ENCODE measurements at regions of chr1 and their contacts with region 1.

Region 1: GRCh38 chr1:116485071-116485735 is 85.6 kb downstream of the CD58 start:
- DNase-seq: peak; percentile 87 to 95 (median 89)
- ATAC-seq: peak; percentile 96
- H3K4me3 ChIP-seq: no peak overlapping the region
- H3K27ac ChIP-seq: no peak overlapping the region
- H3K4me1 ChIP-seq: peaks cover 11 to 16% of the 10 kb centered on the region in 2 experiments; a peak in 3 of 5 replicates
- H3K27me3 ChIP-seq: no peaks in the 10 kb centered on the region; a peak in 1 of 5 replicates
- CTCF ChIP-seq: peak; percentile 96 to 97 (median 97)
- EP300 ChIP-seq: no peak
- POLR2A ChIP-seq: no peak
- RAD21 ChIP-seq: peak; percentile 98 to 100

Region 2: GRCh38 chr1:115275212-115275611 is 1210.0 kb before region 1 on chr1:
- CTCF ChIA-PET with region 1: no interaction called
- POLR2A ChIA-PET with region 1: no interaction called
- in situ Hi-C with region 1: no loop called
- intact Hi-C with region 1: no loop called
- DNase-seq: peak; percentile 30 to 58 (median 54)
- ATAC-seq: peak; percentile 59; the same call in 2 of the 3 replicates
- H3K4me3 ChIP-seq: no peak overlapping the region
- H3K27ac ChIP-seq: no peak overlapping the region
- H3K4me1 ChIP-seq: no peaks in the 10 kb centered on the region
- H3K27me3 ChIP-seq: no peaks in the 10 kb centered on the region
- CTCF ChIP-seq: peak; percentile 45 to 58 (median 58); a peak in 5 of 6 replicates
- EP300 ChIP-seq: no peak
- POLR2A ChIP-seq: no peak
- RAD21 ChIP-seq: peak in 1 of 2 experiments; percentile 39; a peak in 1 of 4 replicates

Region 3: DNA sequence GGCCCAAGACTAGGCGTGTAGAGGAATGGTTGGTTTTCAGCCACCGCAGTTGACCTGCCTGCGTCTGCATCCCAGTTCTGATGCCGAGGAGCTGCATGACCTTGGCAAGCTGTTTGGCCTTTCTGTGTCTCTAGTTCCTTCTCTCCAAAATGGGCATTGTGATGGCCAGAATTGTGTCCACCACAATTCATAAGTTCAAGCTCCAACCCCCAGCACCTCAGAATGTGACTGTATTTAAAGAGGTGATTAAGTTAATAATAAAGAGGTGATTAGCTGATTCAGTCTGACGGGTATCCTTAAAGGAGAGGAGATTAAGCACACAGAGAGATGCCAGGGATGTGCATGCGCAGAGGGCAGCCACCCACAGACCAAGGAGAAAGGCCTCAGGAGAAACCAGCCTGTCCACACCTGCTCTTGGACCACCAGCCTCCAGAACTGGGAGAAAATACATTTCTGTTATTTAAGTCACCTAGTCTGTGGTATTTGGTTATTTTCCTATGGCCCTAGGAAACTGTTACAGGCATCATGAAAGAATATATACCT is 345.5 kb before region 1 on chr1:
- CTCF ChIA-PET with region 1: interaction called, 74 read pairs
- POLR2A ChIA-PET with region 1: interaction called, 16 read pairs
- in situ Hi-C with region 1: no loop called
- intact Hi-C with region 1: loop called (anchors 1 kb)
- DNase-seq: no peak
- ATAC-seq: no peak
- H3K4me3 ChIP-seq: no peak overlapping the region
- H3K27ac ChIP-seq: no peak overlapping the region
- H3K4me1 ChIP-seq: no peaks in the 10 kb centered on the region; a peak in 1 of 5 replicates
- H3K27me3 ChIP-seq: no peaks in the 10 kb centered on the region
- CTCF ChIP-seq: no peak
- EP300 ChIP-seq: no peak
- POLR2A ChIP-seq: no peak
- RAD21 ChIP-seq: no peak

Region 4: DNA sequence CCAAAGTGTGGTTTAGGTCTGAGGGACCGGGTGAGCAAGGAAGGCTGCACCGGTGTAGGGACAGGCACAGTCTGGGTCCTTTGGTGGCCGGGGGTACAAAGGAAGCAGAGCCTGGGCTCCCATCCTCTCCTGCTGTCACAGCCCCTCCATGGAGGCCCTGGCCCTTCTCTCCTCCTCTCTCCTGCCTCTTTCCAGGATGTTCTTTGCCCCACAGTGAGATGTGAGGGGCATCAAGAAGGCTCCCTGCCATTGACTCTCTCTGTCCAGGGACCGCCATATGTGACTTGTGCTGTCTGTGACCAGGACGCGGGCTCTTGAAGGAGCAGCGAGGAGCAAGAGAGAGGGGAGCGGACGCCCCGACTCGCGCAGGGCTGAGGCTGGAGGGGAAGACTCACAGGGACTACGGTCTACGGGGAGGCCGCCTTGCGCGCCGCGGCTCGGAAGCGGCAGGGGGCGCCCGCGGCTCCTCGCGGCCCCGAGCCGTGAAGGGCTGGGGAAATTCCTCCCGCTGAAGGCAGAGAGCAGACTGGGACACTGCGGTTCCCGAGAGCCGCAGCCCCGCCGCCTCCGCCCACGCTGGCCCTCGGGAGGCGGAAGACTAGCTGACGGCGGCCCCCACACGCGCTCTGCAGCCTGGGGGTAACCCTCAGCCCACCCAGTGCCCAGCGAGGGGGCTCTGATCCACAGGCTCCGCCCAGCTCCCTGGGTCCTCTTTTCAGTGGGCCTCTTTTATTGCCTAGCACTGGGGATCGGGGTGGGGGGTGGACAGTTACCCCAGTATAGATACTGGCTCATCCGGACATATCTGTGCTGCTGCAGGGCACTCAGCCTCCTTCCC is 333.2 kb before region 1 on chr1:
- CTCF ChIA-PET with region 1: interaction called, 30 read pairs
- POLR2A ChIA-PET with region 1: interaction called, 4 read pairs
- in situ Hi-C with region 1: no loop called
- intact Hi-C with region 1: loop called (anchors 5 kb)
- DNase-seq: peak; percentile 88 to 94 (median 93)
- ATAC-seq: peak; percentile 99
- H3K4me3 ChIP-seq: peak overlapping the region; percentile 45
- H3K27ac ChIP-seq: peak overlapping the region; percentile 51; the same call in 1 of the 3 replicates
- H3K4me1 ChIP-seq: peaks cover 4 to 7% of the 10 kb centered on the region in 2 experiments
- H3K27me3 ChIP-seq: peaks cover 7% of the 10 kb centered on the region in 2 experiments; a peak in 2 of 5 replicates
- CTCF ChIP-seq: peak; percentile 94 to 99 (median 97)
- EP300 ChIP-seq: no peak
- POLR2A ChIP-seq: no peak
- RAD21 ChIP-seq: peak; percentile 92 to 93

Region 5: DNA sequence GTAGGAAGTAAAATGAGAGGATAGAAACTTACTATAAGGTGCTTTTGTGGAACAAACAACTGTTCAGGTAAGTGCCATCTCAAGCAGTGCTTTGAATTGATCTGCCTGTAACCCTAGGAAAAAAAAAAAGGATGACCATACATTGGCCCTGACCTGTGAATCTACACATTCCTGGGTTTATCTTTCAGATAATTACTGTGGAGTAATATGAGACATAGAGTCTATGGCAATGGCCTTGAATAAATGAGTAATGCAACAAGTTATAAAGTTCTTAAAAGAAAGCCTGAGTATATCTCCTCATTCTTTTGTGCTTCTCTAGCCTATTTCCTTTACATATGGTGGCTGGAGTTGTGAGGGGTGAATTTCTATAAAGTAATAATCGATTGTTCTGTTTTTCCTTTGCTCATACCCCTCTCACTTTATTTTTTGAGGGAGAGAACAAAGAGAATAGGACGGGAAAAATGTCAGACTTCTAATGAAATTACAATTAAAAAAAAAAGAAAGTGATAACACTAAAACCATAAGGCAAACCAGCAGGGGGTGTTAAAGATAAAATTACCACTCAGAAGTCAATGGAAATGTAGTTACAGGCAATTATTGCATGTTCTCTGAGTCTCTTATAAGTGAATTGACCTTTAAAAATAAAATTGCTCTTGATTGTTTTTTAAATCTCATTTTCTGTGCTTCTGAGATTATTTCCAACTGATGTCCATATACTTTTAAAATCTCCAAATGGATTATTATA is 124.6 kb before region 1 on chr1:
- CTCF ChIA-PET with region 1: interaction called, 33 read pairs
- POLR2A ChIA-PET with region 1: interaction called, 4 read pairs
- in situ Hi-C with region 1: loop called (anchors 5 kb)
- intact Hi-C with region 1: loop called (anchors 1 kb)
- DNase-seq: peak; percentile 39 to 59 (median 50)
- ATAC-seq: peak; percentile 65
- H3K4me3 ChIP-seq: no peak overlapping the region
- H3K27ac ChIP-seq: no peak overlapping the region
- H3K4me1 ChIP-seq: no peaks in the 10 kb centered on the region; a peak in 1 of 5 replicates
- H3K27me3 ChIP-seq: peaks cover 3 to 5% of the 10 kb centered on the region in 2 experiments; a peak in 3 of 5 replicates
- CTCF ChIP-seq: peak; percentile 31 to 75 (median 32); a peak in 3 of 6 replicates
- EP300 ChIP-seq: no peak
- POLR2A ChIP-seq: no peak
- RAD21 ChIP-seq: peak; percentile 52 to 87

Region 6: DNA sequence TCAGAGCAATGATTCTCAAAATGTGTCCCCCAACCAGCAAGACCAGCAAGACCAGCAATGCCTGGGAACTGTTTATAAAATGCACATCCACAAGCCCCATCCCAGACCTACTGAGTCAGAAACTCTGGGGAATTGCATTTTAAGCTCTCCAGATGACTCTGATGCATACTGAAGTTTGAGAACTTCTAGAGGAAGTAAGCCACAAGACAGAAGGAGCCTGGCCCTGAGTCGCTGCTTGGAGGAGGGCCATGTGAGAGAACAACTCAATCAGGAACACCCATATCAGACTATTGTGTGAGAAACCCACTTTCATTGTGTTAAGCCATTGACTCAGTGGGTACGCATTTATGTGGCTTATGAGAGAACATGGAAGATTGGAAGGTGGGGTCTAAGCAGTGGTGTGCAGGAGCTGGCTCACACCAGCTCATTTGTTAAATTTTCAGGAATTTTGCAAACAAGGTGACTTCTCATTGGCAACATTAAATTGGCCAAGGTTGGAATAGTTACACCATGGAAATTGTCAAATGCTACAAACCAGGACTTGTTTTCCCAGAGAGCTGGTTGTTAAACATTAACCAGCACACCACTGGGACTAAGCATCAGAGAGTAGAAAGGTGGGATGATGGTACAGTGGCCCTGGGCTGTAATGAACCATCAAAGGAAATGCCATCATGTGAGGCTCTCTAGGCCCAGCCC is 73.3 kb before region 1 on chr1:
- CTCF ChIA-PET with region 1: no interaction called
- POLR2A ChIA-PET with region 1: interaction called, 7 read pairs
- in situ Hi-C with region 1: no loop called
- intact Hi-C with region 1: loop called (anchors 2 kb)
- DNase-seq: no peak
- ATAC-seq: no peak
- H3K4me3 ChIP-seq: no peak overlapping the region
- H3K27ac ChIP-seq: no peak overlapping the region
- H3K4me1 ChIP-seq: peaks cover 41 to 83% of the 10 kb centered on the region in 2 experiments
- H3K27me3 ChIP-seq: no peaks in the 10 kb centered on the region
- CTCF ChIP-seq: no peak
- EP300 ChIP-seq: no peak
- POLR2A ChIP-seq: no peak
- RAD21 ChIP-seq: no peak

Region 7: GRCh38 chr1:117036018-117036461 is 550.8 kb after region 1 on chr1:
- CTCF ChIA-PET with region 1: no interaction called
- POLR2A ChIA-PET with region 1: no interaction called
- in situ Hi-C with region 1: no loop called
- intact Hi-C with region 1: no loop called
- DNase-seq: peak in 3 of 4 experiments; percentile 37 to 44 (median 38)
- ATAC-seq: peak; percentile 87
- H3K4me3 ChIP-seq: no peak overlapping the region
- H3K27ac ChIP-seq: no peak overlapping the region
- H3K4me1 ChIP-seq: no peaks in the 10 kb centered on the region; a peak in 2 of 5 replicates
- H3K27me3 ChIP-seq: no peaks in the 10 kb centered on the region
- CTCF ChIP-seq: peak in 2 of 3 experiments; percentile 36 to 38; a peak in 2 of 6 replicates
- EP300 ChIP-seq: no peak
- POLR2A ChIP-seq: no peak
- RAD21 ChIP-seq: peak in 1 of 2 experiments; percentile 21; a peak in 1 of 4 replicates

Measured in K562 (cell line).